ENCODE measurements at regions of chr11 and their contacts with region 1.

Region 1: DNA sequence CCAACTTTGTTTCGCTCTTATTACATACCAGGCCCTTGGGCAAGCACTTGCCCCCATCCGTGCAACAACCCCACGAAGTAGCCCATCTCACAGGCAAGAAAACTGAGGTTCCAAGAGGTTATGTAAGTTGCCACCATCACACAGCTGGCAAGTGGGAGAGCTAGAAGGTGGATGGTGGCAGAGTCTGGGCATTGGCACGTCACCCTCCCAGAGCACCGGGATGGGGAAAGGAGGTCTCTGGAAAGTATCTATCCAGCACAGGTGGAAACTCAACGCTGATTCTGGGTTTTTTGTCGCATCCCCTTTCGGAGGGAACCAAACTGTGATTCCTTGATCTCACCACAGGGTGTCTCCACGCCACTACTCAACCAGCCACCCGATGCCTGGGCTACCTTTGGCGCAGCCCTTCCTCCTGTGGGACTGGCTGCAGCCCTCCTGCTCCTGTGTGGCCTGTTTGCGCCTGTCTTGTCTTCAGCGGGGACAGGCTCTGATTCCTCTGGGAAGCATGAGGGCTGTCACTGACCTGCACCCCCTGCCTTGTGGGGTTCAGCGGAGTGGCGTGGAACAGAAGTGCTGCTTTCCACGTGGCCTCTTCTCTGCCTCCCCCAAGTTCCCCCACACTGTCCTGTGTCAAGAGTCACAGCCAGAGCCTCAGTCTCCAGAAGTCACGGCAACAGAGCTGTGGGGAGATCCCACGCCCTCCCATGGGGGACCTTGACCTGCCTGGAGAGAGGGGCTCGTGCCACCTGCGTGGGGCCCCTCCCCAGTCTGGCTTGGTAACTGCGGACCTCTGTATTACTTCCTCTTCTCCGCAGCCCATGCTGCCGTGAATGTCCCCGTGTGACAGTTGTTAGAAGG is 34.4 kb upstream of the TRIM29 start:
- DNase-seq: peak; percentile 52
- H3K4me3 ChIP-seq: no peak overlapping the region
- H3K27ac ChIP-seq: no peak overlapping the region
- H3K4me1 ChIP-seq: peaks cover 16% of the 10 kb centered on the region
- H3K27me3 ChIP-seq: no peaks in the 10 kb centered on the region
- CTCF ChIP-seq: peak; percentile 65 to 93

Region 2: DNA sequence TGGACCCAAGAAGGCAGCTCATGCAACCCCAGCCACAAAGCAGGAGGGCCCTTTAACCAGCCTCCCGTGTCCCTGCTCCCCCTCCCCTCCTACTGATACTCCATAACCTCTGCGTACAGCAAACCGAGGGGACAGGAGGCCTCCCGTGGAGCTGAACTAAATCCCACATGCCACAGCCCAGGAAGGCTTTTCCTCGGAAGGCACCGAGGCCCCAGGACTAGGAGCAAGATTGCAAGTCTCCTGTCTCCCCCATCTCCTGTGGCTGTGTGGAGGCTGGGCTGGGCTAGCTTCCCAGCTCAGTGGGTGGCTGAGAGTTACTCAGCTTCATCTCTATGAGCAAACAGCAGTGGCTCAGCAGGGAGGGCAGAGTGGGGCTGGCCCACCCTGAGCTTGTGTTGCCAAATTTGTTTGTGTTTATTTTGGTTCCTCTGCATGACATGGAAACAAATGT is 380.6 kb before region 1 on chr11:
- CTCF ChIA-PET with region 1: no interaction called
- dilution Hi-C with region 1: no loop called
- in situ Hi-C with region 1: no loop called
- intact Hi-C with region 1: no loop called
- DNase-seq: no peak
- H3K4me3 ChIP-seq: no peak overlapping the region
- H3K27ac ChIP-seq: no peak overlapping the region
- H3K4me1 ChIP-seq: no peaks in the 10 kb centered on the region
- H3K27me3 ChIP-seq: no peaks in the 10 kb centered on the region
- CTCF ChIP-seq: no peak

Region 3: DNA sequence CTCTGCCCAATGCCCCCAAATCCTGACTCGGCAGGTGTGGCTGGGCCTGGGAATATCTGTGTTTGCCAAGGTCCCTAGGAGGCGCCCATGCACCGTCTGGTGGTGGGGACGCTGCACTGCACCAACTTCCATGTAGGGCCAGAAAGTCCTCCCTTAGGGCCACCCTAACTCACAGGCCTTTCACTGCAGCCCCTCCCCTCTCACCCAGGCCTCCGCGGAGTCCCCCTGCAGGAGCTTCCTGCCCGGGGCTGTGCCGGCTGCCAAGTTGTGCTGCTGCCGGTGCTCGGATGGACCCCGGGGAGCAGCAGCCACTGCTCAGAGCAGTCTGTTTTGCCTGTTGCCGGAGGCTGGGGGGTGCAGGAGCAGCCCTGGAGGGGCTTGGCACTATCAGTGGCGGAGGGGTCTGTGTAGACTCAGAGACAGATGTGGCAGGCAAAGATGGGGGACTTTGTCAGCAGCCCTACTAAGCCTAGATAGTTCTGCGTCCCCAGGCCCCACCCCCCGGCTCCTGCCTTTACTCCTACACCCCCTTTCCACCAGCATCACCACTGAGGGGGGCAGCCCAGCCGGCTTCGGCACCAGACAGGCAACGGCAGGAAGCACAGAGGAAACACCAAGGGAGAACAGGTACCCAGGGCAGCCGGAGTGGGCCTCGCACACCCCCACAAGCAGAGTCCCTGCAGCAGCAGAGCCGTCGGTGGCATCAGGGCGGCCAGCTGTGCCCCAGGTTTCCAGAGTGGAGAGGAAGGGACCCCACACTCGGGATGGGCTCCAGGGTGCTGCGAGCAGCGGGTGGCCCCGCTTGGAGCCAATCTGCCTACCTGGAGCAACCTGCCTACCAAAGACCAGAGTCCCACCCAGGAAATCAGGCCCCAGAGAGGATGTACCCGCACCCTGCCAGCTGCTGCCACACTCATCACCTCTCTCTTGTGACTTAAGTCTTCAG is 158.7 kb before region 1 on chr11:
- CTCF ChIA-PET with region 1: no interaction called
- dilution Hi-C with region 1: no loop called
- in situ Hi-C with region 1: no loop called
- intact Hi-C with region 1: loop called (anchors 1 kb)
- DNase-seq: peak; percentile 40
- H3K4me3 ChIP-seq: no peak overlapping the region
- H3K27ac ChIP-seq: no peak overlapping the region
- H3K4me1 ChIP-seq: no peaks in the 10 kb centered on the region
- H3K27me3 ChIP-seq: peaks cover 2% of the 10 kb centered on the region
- CTCF ChIP-seq: peak; percentile 87 to 98

Region 4: DNA sequence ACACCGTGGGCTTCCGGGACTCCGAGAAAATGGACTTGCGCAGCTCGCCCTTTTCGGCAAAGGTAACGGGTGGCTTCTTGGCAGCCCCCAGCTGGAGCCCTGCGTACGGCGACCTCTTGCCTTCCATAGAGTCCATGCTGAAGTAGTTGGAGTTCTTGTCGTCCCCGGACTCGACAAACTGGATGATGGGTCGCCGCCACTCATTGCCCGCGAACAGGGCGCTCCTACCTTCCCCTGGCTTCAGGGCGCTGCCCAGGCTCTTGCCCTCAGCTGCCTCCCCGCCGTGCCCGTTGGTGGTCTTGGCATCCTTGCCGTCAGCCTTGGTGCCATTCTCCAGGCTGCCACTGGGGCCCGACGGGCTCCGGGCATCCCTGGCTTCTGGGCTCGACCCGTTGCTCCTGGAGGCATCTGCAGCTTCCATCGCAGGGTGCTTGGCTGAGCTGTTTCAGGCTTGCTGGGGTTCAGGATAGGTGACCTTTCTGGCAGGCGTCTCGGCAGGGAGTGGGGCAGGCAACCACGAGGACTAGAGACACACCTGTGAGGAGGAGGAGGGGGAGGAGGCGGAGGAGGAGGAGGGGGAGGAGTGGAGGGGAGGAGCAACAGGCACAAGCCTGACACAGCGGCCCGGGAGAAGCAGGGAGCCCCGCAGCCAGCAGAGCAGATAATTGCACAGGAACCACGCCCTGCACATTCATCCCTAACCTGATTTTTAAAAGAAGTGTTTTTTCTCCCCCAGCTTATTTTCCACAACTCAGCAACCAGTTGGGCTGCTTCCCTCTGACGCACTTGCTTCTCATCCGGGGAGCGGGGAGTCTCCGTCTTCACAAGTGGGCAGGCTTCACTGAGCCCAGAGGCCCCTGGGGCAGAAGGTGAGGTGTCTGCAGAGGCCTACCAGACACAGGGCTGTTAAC is 34.4 kb before region 1 on chr11 and contains the start of gene TRIM29:
- CTCF ChIA-PET with region 1: interaction called, 9 read pairs
- dilution Hi-C with region 1: loop called (anchors 5 kb)
- in situ Hi-C with region 1: loop called in 1 of 2 experiments (anchors 5 kb)
- intact Hi-C with region 1: loop called (anchors 1 kb)
- DNase-seq: peak; percentile 92
- H3K4me3 ChIP-seq: peak within 1 kb of the TSS; percentile 51 to 97 (median 96)
- H3K27ac ChIP-seq: peak within 1 kb of the TSS; percentile 78
- H3K4me1 ChIP-seq: peaks cover 37% of the 10 kb centered on the region
- H3K27me3 ChIP-seq: no peaks in the 10 kb centered on the region
- CTCF ChIP-seq: peak; percentile 59 to 60
- total RNA-seq, gene TRIM29: 256 to 341 TPM

Region 5: DNA sequence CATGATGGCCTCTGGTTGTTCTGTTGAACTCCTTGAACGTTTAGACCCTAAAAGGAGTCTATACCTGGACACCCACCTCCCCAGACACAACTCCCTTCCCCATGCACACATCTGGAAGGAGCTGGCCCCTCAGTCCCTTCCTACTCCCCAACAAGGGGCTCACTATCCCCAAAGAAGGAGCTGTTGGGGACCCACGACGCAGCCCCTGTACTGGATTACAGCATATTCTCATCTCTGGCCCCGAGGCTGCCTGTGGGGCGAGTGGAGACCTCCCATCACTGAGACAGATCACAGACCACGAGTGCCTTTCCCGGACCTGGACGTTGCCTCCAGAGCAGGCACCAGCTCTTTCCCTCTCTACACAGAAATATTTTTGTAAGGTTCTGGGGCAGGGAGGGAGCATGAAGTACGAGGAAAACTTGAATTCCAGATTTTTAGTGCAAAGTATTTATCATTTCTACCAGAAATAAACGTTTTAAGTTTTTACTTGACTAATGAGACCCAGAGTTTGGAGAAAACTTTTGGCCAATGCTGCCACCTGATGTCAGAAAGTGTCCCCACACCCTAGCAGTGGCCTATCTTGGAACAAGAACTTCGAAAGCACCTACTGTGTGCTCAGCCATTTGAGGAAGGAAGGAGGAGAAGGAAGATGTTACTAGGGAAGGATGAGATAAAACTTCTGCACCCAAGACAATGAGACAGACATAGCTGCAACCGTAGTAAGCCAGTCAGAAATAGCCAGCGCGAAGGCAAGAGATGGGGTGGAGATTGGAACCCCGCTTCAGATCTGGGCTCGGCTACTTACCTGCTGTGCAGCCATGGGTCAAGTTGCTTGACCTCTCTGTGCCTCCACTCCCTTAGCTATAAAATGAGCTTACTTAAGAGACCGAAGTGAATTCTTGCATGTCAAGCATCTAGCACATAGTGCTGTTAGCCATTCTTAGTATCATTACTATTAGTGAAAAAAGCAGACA is 57.5 kb after region 1 on chr11:
- CTCF ChIA-PET with region 1: no interaction called
- dilution Hi-C with region 1: no loop called
- in situ Hi-C with region 1: loop called (anchors 5 kb)
- intact Hi-C with region 1: loop called (anchors 1 kb)
- DNase-seq: no peak
- H3K4me3 ChIP-seq: no peak overlapping the region
- H3K27ac ChIP-seq: no peak overlapping the region
- H3K4me1 ChIP-seq: no peaks in the 10 kb centered on the region
- H3K27me3 ChIP-seq: no peaks in the 10 kb centered on the region
- CTCF ChIP-seq: peak; percentile 64 to 71

Region 6: DNA sequence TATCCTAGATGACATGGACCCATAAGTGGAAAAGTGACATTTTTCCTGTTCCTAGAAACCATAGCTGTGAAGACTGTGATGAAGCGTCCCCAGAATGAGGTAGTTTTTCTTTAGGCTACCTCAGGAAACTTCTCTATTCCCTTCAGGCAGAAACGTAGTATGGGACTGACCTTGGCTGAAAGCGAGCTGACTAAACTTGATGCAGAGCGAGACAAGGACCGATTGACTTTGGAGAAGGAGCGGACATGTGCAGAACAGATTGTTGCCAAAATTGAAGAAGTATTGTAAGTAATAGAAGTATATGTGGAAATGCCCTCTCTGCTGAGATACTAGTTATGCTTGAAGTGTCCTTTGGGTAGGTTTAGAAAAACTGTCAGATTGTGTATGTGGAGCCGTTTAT is 274.5 kb after region 1 on chr11:
- CTCF ChIA-PET with region 1: no interaction called
- dilution Hi-C with region 1: no loop called
- in situ Hi-C with region 1: no loop called
- intact Hi-C with region 1: no loop called
- DNase-seq: no peak
- H3K4me3 ChIP-seq: no peak overlapping the region
- H3K27ac ChIP-seq: no peak overlapping the region
- H3K4me1 ChIP-seq: no peaks in the 10 kb centered on the region
- H3K27me3 ChIP-seq: no peaks in the 10 kb centered on the region
- CTCF ChIP-seq: no peak

Region 7: GRCh38 chr11:120652705-120653335 is 480.5 kb after region 1 on chr11:
- CTCF ChIA-PET with region 1: no interaction called
- dilution Hi-C with region 1: no loop called
- in situ Hi-C with region 1: no loop called
- intact Hi-C with region 1: no loop called
- DNase-seq: no peak
- H3K4me3 ChIP-seq: no peak overlapping the region
- H3K27ac ChIP-seq: no peak overlapping the region
- H3K4me1 ChIP-seq: no peaks in the 10 kb centered on the region
- H3K27me3 ChIP-seq: no peaks in the 10 kb centered on the region
- CTCF ChIP-seq: no peak